Activated CD4-positive, alpha-beta T cell treated with anti-CD3 and anti-CD28 coated beads, Interleukin-2, amount 10 ng/mL, durations not matched to agents 7 days and 5 days (primary cell): ENCODE measurements at regions of chr22 and their contacts with region 1.

Region 1: GRCh38 chr22:35971456-35972119 is 57.0 kb downstream of the RBFOX2 start:
- DNase-seq: no peak
- H3K4me3 Mint-ChIP-seq: no peak overlapping the region
- H3K27ac Mint-ChIP-seq: no peak overlapping the region
- H3K4me1 Mint-ChIP-seq: no peaks in the 10 kb centered on the region
- H3K27me3 Mint-ChIP-seq: peaks cover 5% of the 10 kb centered on the region

Region 2: GRCh38 chr22:35648066-35649025 is 323.2 kb before region 1 on chr22 and contains the start of gene APOL6:
- CTCF ChIA-PET with region 1: no interaction called
- POLR2A ChIA-PET with region 1: interaction called, 11 read pairs
- DNase-seq: peak; percentile 84
- H3K4me3 Mint-ChIP-seq: peak within 1 kb of the TSS; percentile 99
- H3K27ac Mint-ChIP-seq: peak within 1 kb of the TSS; percentile 100
- H3K4me1 Mint-ChIP-seq: peaks cover 38% of the 10 kb centered on the region
- H3K27me3 Mint-ChIP-seq: no peaks in the 10 kb centered on the region
- total RNA-seq, gene APOL6: 83.6 to 91.5 TPM

Region 3: DNA sequence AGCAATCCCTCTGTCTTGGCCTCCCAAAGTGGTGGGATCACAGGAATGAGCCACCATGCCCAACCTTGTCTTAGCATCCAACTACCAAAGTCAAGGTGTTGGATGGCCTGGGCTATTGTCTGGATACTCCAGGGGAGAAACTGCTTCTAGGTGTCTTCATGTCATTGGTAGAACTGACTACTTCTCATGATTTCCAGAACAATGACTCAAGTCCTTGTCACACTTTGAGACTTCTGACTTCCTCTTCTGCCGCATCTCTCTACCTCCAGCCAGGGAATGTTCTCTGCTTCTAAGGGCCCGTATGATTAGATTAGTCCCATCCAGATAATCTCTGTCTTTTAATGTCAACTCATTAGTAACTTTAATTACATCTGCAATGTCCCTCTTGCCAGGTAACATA is 292.8 kb before region 1 on chr22:
- CTCF ChIA-PET with region 1: no interaction called
- POLR2A ChIA-PET with region 1: no interaction called
- DNase-seq: no peak
- H3K4me3 Mint-ChIP-seq: no peak overlapping the region
- H3K27ac Mint-ChIP-seq: no peak overlapping the region
- H3K4me1 Mint-ChIP-seq: no peaks in the 10 kb centered on the region
- H3K27me3 Mint-ChIP-seq: no peaks in the 10 kb centered on the region

Region 4: DNA sequence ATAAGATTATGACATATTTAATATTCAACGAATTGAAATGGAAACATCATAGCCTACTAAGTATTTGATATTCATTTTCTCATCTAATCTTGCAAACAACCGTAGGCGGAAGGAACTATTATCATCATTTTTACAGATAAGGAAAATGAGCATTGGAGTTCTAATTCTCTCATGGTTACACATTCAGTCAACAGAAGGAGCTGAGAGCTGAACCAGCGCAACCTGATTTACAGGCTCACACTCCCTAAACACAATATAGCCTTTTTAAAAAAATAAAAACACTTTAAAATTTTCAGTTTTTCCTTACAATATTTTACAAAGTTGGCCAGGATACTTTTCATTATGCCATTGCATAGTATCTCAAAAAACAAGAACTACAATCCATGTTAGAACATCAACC is 179.1 kb before region 1 on chr22:
- CTCF ChIA-PET with region 1: no interaction called
- POLR2A ChIA-PET with region 1: no interaction called
- DNase-seq: no peak
- H3K4me3 Mint-ChIP-seq: no peak overlapping the region
- H3K27ac Mint-ChIP-seq: no peak overlapping the region
- H3K4me1 Mint-ChIP-seq: peaks cover 4% of the 10 kb centered on the region
- H3K27me3 Mint-ChIP-seq: peaks cover 2% of the 10 kb centered on the region